MCF 10A (cell line): ENCODE measurements at regions of chr9 and their contacts with region 1.

Region 1: DNA sequence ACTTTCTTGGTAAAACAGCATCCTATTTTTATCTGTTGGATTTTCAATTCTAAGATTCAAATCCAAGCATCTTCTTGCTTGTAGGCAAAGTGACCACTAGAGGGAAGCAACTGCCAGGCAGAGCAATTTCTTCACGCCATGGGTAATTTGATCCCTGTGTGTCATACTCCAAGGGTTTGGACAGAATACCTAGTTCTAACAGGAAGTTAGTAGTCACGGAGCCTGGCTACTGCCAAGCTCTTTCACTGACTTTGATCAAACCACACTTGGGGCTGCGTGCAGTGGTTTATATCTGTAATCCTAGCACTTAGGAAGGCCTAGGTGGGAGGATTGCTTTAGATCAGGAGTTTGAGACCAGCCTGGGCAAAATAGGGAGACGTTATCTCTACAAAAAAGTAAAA is 473.6 kb upstream of the TNC start:
- DNase-seq: peak; percentile 98
- H3K4me3 Mint-ChIP-seq: no peak overlapping the region
- H3K27ac Mint-ChIP-seq: peak overlapping the region; percentile 94
- H3K4me1 Mint-ChIP-seq: peaks cover 45% of the 10 kb centered on the region
- H3K27me3 Mint-ChIP-seq: no peaks in the 10 kb centered on the region
- CTCF ChIP-seq: peak; percentile 82

Region 2: DNA sequence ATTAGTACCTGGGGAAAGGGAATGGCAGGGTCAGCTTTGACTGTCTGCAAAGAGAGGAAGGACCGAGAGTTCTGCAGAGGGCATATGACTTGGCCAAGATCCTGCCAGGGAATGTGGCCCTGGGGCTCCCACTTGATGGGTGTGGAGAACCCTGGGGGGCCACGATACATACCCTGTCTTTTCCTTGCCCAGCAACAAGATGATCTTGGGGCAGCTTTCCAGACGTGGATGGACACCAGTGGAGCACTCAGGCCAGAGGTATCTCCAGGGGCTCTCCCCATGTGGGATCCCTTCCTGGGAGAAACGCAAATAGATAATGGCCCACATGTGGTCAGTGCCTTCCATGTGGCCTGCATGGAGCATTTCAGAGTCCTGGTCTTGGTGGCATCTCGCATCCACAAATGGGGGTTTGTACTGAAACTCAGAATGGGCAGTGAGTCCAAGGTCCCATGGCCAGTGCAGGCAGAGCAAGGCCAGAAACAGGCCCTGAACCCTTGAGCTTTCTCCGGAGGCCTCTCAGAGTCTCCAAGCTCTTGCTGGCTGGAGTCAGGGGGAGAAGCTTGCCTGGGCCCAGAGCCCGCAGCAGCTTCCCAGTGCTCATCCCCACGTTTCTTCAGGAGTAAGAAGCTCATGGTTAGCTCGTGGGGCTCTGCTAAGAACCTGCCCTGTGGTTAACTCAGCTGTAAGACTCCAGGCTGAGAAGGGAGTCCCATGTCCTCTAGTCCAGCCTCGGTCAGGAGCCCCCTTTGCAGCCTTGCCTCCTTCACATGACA is 1287.0 kb before region 1 on chr9:
- CTCF ChIA-PET with region 1: no interaction called
- POLR2A ChIA-PET with region 1: no interaction called
- intact Hi-C with region 1: no loop called
- DNase-seq: no peak
- H3K4me3 Mint-ChIP-seq: no peak overlapping the region
- H3K27ac Mint-ChIP-seq: no peak overlapping the region
- H3K4me1 Mint-ChIP-seq: no peaks in the 10 kb centered on the region
- H3K27me3 Mint-ChIP-seq: no peaks in the 10 kb centered on the region
- CTCF ChIP-seq: no peak

Region 3: GRCh38 chr9:115643948-115644727 is 52.6 kb after region 1 on chr9:
- CTCF ChIA-PET with region 1: interaction called, 11 read pairs
- POLR2A ChIA-PET with region 1: no interaction called
- intact Hi-C with region 1: no loop called
- DNase-seq: peak; percentile 50
- H3K4me3 Mint-ChIP-seq: peak overlapping the region; percentile 4
- H3K27ac Mint-ChIP-seq: peak overlapping the region; percentile 55
- H3K4me1 Mint-ChIP-seq: peaks cover 36% of the 10 kb centered on the region
- H3K27me3 Mint-ChIP-seq: no peaks in the 10 kb centered on the region
- CTCF ChIP-seq: no peak

Region 4: GRCh38 chr9:115877920-115878319 is 286.3 kb after region 1 on chr9:
- CTCF ChIA-PET with region 1: interaction called, 81 read pairs
- POLR2A ChIA-PET with region 1: no interaction called
- intact Hi-C with region 1: loop called (anchors 1 kb)
- DNase-seq: peak; percentile 24
- H3K4me3 Mint-ChIP-seq: no peak overlapping the region
- H3K27ac Mint-ChIP-seq: no peak overlapping the region
- H3K4me1 Mint-ChIP-seq: no peaks in the 10 kb centered on the region
- H3K27me3 Mint-ChIP-seq: no peaks in the 10 kb centered on the region
- CTCF ChIP-seq: no peak

Region 5: GRCh38 chr9:116112236-116112635 is 520.7 kb after region 1 on chr9:
- CTCF ChIA-PET with region 1: interaction called, 9 read pairs
- POLR2A ChIA-PET with region 1: no interaction called
- intact Hi-C with region 1: loop called (anchors 2 kb)
- DNase-seq: peak; percentile 59
- H3K4me3 Mint-ChIP-seq: no peak overlapping the region
- H3K27ac Mint-ChIP-seq: no peak overlapping the region
- H3K4me1 Mint-ChIP-seq: peaks cover 9% of the 10 kb centered on the region
- H3K27me3 Mint-ChIP-seq: no peaks in the 10 kb centered on the region
- CTCF ChIP-seq: peak; percentile 18

Region 6: DNA sequence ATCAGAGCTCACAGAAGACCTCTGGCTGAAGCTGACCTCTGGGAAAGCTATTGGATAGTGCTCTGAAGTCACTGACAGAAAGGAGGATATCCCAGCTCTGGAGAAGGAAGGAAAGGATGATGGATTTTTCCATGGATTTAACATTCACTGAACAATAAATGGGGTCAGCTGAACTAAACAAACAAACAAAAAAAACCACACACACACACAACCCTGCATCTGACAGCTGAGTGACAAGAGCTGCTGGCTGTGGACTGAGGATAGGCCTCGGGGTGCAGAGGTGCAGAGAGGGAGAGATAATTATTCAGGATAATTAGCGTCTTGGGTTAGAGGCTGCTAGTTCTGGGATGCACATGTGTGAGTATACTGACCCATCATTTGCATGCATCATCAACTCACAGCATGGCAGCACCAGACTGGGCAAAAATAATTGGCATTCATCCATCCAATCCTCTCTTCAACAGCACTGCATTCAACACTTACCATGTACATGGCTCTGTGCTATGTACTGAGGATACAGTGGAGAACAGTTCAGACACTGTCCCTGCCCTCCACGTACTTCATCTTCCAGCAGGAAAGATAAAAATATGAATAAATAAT is 964.1 kb after region 1 on chr9:
- CTCF ChIA-PET with region 1: interaction called, 14 read pairs
- POLR2A ChIA-PET with region 1: no interaction called
- intact Hi-C with region 1: no loop called
- DNase-seq: no peak
- H3K4me3 Mint-ChIP-seq: no peak overlapping the region
- H3K27ac Mint-ChIP-seq: no peak overlapping the region
- H3K4me1 Mint-ChIP-seq: no peaks in the 10 kb centered on the region
- H3K27me3 Mint-ChIP-seq: no peaks in the 10 kb centered on the region
- CTCF ChIP-seq: no peak

Region 7: DNA sequence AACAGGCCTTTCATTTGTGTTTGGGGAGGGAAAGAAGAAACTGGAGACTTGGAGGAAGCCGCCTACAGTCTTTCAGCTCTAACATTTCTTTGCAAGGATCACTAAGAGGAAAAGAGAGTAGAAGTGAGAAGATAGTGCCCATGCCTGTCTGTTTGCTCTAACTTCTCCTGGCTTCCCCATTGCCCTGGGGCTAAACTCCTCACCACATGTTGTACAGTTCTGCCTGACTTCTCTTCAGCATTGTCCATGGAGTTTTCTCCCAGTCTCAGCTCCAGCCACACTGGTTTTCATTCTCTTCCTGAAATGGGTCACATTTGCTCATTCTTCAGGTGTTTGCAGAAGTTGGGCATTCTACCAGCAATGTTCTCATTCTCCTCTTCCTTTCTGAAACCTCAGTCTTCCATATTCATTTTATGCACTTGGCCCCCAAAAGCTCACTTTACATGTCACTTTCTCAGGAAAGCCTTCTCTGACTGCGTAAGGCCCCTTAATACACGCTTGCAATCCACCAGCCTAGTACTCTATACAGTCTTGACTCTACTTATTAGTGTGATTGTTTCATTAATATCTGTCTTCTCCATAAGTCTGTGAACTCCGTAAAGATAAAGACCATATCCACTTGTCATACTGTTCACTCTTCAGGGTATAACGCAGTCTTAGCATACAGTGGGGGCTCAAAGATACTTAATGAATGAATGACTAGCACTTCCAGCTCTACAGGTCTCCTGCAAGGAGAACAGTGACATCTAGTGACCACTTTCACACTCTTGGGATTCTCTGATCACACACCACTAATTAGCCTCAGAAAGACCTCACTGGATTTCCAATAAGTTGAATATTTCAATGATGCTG is 1055.3 kb after region 1 on chr9:
- CTCF ChIA-PET with region 1: interaction called, 169 read pairs
- POLR2A ChIA-PET with region 1: no interaction called
- intact Hi-C with region 1: loop called (anchors 1 kb)
- DNase-seq: peak; percentile 59
- H3K4me3 Mint-ChIP-seq: no peak overlapping the region
- H3K27ac Mint-ChIP-seq: no peak overlapping the region
- H3K4me1 Mint-ChIP-seq: peaks cover 6% of the 10 kb centered on the region
- H3K27me3 Mint-ChIP-seq: no peaks in the 10 kb centered on the region
- CTCF ChIP-seq: peak; percentile 80